ENCODE measurements at regions of chr12 and their contacts with region 1.

Region 1: DNA sequence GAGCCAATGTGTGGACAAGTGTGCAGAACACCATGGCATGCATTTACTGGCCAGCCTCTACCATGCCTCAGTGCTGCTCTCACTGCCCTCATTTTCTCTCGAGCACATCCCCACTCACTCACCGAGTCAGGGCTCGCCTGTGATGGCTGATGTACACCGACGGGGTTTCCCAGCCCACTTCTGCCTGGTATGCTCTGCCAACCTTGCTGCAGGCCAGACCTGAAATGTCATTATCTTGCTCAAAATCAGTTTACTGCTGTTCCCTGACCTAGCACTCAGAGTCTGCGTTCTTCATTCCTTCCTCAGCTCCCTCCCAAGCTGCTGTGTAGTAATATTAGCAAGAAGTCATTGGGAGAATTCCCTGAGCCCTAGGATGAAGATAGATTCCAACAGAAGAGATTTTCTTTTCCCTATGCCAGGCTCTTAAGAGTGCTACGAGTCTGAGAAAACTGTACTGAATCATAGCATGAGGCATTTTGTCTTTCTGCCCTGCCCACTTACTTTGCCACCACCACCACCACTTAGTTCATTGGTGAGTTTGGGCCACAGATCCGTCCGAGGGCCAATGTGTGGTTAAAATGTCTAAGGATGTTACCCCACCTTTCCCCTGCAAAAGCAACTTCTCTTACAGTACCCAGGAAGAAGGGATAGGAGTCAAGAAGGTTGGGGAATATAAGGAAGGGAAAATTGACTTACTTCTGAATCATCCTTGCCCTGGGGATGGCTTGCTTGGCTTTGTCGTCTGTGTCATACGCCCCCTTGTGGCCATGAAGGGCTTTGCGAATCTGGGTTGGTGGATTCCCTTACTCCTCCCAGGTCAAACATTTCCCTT is 51.0 kb downstream of the BMAL2 start:
- DNase-seq: peak; percentile 76 to 89
- ATAC-seq: peak; percentile 88 to 96
- H3K4me3 ChIP-seq: no peak overlapping the region
- H3K27ac ChIP-seq: peak overlapping the region in 1 of 2 experiments; percentile 45; a peak in 1 of 6 replicates
- H3K4me1 ChIP-seq: peaks cover 18% of the 10 kb centered on the region; the same call in 2 of the 3 replicates
- CTCF ChIP-seq: peak; percentile 84
- EP300 ChIP-seq: no peak
- POLR2A ChIP-seq: no peak
- RAD21 ChIP-seq: peak; percentile 73 to 76

Region 2: DNA sequence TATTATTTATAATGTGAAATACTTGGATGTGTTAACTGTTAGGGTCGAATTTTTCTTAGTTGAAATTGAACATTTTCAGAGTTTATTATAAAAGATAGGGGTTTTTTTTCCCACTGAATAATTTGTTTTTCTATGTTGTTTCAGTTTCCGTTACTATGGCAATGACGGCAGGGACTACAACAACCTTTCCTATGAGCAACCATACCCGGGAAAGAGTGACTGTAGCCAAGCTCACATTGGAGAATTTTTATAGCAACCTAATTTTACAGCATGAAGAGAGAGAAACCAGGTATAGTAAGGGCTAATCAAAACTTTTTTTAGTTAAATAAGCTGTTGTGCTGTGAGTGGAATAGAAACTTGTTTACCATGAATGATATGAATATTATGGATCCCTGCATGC is 86.1 kb before region 1 on chr12:
- CTCF ChIA-PET with region 1: no interaction called
- POLR2A ChIA-PET with region 1: no interaction called
- DNase-seq: no peak
- ATAC-seq: no peak
- H3K4me3 ChIP-seq: no peak overlapping the region
- H3K27ac ChIP-seq: no peak overlapping the region
- H3K4me1 ChIP-seq: no peaks in the 10 kb centered on the region
- CTCF ChIP-seq: no peak
- EP300 ChIP-seq: no peak
- POLR2A ChIP-seq: no peak
- RAD21 ChIP-seq: no peak

Region 3: GRCh38 chr12:27355486-27355885 is 28.2 kb before region 1 on chr12:
- CTCF ChIA-PET with region 1: interaction called, 15 read pairs
- POLR2A ChIA-PET with region 1: no interaction called
- DNase-seq: no peak
- ATAC-seq: no peak
- H3K4me3 ChIP-seq: no peak overlapping the region
- H3K27ac ChIP-seq: no peak overlapping the region
- H3K4me1 ChIP-seq: no peaks in the 10 kb centered on the region
- CTCF ChIP-seq: no peak
- EP300 ChIP-seq: no peak
- POLR2A ChIP-seq: no peak
- RAD21 ChIP-seq: no peak

Region 4: GRCh38 chr12:27367078-27367477 is 16.6 kb before region 1 on chr12:
- CTCF ChIA-PET with region 1: interaction called, 23 read pairs
- POLR2A ChIA-PET with region 1: no interaction called
- DNase-seq: no peak
- ATAC-seq: no peak
- H3K4me3 ChIP-seq: no peak overlapping the region
- H3K27ac ChIP-seq: no peak overlapping the region
- H3K4me1 ChIP-seq: peaks cover 6% of the 10 kb centered on the region; the same call in 1 of the 3 replicates
- CTCF ChIP-seq: no peak
- EP300 ChIP-seq: no peak
- POLR2A ChIP-seq: no peak
- RAD21 ChIP-seq: no peak

Region 5: DNA sequence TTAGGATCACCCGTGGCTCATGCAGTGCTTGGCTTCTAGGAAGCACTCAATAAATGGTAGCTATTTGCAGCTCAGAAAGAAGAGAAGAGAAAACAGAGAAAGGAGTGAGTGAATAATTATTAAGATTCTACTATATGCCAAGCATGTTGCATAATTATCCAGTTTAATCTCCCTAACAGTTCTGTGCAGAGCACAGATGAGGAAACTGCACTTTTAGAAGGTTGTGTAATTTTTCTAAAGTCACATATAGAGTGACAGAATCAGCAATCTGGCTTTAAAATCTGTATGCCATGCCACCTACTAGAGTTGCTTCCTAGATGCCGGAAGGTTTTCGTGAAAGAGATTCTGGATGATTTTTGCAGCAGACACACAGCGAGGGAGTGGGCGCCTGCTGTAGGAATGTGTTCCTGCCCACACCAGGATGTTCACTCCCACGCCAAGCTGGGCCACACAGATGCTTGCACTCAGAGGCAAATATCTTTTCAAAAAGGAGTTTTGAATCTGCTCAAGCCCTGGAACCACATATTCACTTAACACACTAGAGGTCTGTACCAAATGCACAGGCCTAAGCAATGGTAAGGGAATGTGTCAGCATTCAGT is 12.7 kb after region 1 on chr12:
- CTCF ChIA-PET with region 1: interaction called, 20 read pairs
- POLR2A ChIA-PET with region 1: no interaction called
- DNase-seq: no peak
- ATAC-seq: no peak; a peak in 2 of 6 replicates
- H3K4me3 ChIP-seq: no peak overlapping the region
- H3K27ac ChIP-seq: no peak overlapping the region
- H3K4me1 ChIP-seq: no peaks in the 10 kb centered on the region
- CTCF ChIP-seq: no peak
- EP300 ChIP-seq: no peak
- POLR2A ChIP-seq: no peak
- RAD21 ChIP-seq: no peak

Region 6: GRCh38 chr12:27969624-27970400 is 586.2 kb after region 1 on chr12:
- CTCF ChIA-PET with region 1: no interaction called
- POLR2A ChIA-PET with region 1: no interaction called
- DNase-seq: peak; percentile 47 to 90
- ATAC-seq: peak; percentile 79 to 80
- H3K4me3 ChIP-seq: peak overlapping the region; percentile 64
- H3K27ac ChIP-seq: peak overlapping the region; percentile 82 to 95
- H3K4me1 ChIP-seq: peaks cover 83% of the 10 kb centered on the region
- CTCF ChIP-seq: peak; percentile 65
- EP300 ChIP-seq: no peak
- POLR2A ChIP-seq: peak; percentile 41
- RAD21 ChIP-seq: peak; percentile 73 to 75

Measured in A549 (cell line).